Activated CD4-positive, alpha-beta T cell treated with anti-CD3 and anti-CD28 coated beads for 36 hours (primary cell): ENCODE measurements at regions of chr11 and their contacts with region 1.

Region 1: DNA sequence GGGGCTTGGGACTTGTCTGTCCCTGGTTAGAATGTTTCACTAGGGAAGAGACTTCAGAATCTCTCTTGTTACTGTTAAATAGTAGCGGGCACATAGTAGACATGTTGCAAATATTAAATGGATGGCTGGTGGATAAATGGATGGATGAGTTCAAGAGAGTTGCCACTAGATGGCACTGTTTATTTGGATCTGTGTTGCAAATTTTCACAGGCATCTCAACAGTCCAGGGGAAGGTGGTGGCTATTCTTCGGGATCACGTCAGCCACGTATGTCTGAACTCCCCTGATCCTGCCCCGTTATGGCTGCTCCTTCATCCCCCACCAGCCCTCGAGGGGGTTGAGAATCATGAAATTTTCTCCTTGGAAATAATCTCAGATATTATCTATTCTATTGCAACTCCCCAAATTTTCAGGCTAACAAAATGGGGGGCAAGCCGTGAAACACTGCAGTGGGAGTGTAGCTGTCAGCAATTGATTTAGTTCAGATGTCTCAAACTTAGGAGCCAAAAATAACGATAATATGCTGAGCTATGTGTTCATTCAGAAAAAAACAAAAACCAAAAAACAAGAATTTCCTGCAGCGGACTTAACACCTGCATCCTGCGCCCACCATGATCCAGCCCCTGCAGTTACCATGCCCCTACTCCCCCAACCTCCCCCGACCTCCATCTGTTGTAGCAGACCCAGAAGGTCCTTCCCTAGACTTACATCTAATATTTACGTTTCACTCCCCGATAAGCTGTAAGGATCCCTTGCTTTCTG is 29.1 kb upstream of the BIRC3 start:
- DNase-seq: peak; percentile 50
- ATAC-seq: peak; percentile 92
- H3K4me3 Mint-ChIP-seq: peak overlapping the region; percentile 34
- H3K27ac Mint-ChIP-seq: peak overlapping the region; percentile 59
- H3K4me1 Mint-ChIP-seq: peaks cover 24% of the 10 kb centered on the region
- H3K27me3 Mint-ChIP-seq: no peaks in the 10 kb centered on the region

Region 2: GRCh38 chr11:102237096-102237735 is 50.9 kb before region 1 on chr11:
- CTCF ChIA-PET with region 1: no interaction called
- POLR2A ChIA-PET with region 1: no interaction called
- intact Hi-C with region 1: no loop called
- DNase-seq: no peak
- ATAC-seq: no peak
- H3K4me3 Mint-ChIP-seq: no peak overlapping the region
- H3K27ac Mint-ChIP-seq: no peak overlapping the region
- H3K4me1 Mint-ChIP-seq: no peaks in the 10 kb centered on the region
- H3K27me3 Mint-ChIP-seq: peaks cover 21% of the 10 kb centered on the region

Region 3: GRCh38 chr11:102268329-102269193 is 19.6 kb before region 1 on chr11:
- CTCF ChIA-PET with region 1: interaction called, 15 read pairs
- POLR2A ChIA-PET with region 1: no interaction called
- intact Hi-C with region 1: no loop called
- DNase-seq: peak; percentile 93
- ATAC-seq: peak; percentile 98
- H3K4me3 Mint-ChIP-seq: peak overlapping the region; percentile 66
- H3K27ac Mint-ChIP-seq: peak overlapping the region; percentile 5
- H3K4me1 Mint-ChIP-seq: peaks cover 37% of the 10 kb centered on the region
- H3K27me3 Mint-ChIP-seq: peaks cover 5% of the 10 kb centered on the region

Region 4: DNA sequence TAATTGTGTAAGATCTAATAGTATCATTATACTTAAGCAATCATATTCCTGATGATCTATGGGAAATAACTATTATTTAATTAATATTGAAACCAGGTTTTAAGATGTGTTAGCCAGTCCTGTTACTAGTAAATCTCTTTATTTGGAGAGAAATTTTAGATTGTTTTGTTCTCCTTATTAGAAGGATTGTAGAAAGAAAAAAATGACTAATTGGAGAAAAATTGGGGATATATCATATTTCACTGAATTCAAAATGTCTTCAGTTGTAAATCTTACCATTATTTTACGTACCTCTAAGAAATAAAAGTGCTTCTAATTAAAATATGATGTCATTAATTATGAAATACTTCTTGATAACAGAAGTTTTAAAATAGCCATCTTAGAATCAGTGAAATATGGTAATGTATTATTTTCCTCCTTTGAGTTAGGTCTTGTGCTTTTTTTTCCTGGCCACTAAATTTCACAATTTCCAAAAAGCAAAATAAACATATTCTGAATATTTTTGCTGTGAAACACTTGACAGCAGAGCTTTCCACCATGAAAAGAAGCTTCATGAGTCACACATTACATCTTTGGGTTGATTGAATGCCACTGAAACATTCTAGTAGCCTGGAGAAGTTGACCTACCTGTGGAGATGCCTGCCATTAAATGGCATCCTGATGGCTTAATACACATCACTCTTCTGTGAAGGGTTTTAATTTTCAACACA is 35.6 kb after region 1 on chr11:
- CTCF ChIA-PET with region 1: interaction called, 61 read pairs
- POLR2A ChIA-PET with region 1: interaction called, 3 read pairs
- intact Hi-C with region 1: loop called in 1 of 2 experiments (anchors 1 kb)
- DNase-seq: no peak
- ATAC-seq: no peak
- H3K4me3 Mint-ChIP-seq: no peak overlapping the region
- H3K27ac Mint-ChIP-seq: peak overlapping the region; percentile 47
- H3K4me1 Mint-ChIP-seq: peaks cover 48% of the 10 kb centered on the region
- H3K27me3 Mint-ChIP-seq: no peaks in the 10 kb centered on the region

Region 5: DNA sequence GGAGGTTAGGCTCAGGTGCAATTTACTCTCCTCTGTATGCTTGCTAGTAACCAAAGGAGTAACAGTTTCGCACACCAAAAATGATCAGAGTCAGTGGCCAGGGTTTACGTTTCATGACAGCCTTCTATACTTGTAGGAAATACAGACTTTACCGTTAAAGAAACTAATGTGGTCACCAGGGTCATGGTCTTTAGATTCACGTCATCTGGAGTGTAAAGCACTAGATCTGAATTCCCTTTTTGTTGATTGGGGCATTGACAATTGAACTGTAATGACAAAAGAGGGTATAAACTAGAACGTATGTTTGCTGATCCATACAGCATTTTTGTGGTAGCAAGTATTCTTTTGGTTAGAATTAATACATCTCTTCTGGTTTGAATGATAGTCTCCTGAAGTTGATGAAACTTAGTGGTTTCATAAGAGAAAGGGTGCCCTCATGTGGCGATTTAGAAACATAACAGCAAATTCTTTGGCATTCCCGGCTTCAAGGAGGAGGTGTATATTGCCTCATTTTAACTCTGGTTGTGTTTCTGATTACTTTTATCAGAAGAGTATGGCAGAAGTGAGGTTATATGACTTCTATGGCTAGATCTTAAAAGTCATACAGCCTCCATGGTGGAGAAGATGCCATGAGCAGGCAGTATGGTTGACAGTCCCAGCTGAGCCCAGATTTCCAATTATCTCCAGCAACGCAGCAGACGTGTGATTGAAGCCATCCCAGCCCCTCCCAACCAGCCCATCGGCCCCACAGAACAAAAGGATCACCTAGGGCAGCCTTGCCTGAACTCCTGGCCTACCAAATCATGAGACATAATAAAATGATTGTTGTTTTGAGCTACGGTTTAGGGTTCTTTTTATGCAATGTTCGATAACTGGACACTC is 207.3 kb after region 1 on chr11:
- CTCF ChIA-PET with region 1: interaction called, 12 read pairs
- POLR2A ChIA-PET with region 1: no interaction called
- intact Hi-C with region 1: loop called (anchors 1 kb)
- DNase-seq: peak; percentile 40
- ATAC-seq: peak; percentile 68
- H3K4me3 Mint-ChIP-seq: no peak overlapping the region
- H3K27ac Mint-ChIP-seq: no peak overlapping the region
- H3K4me1 Mint-ChIP-seq: peaks cover 28% of the 10 kb centered on the region
- H3K27me3 Mint-ChIP-seq: peaks cover 4% of the 10 kb centered on the region

Region 6: GRCh38 chr11:102614485-102614884 is 326.3 kb after region 1 on chr11:
- CTCF ChIA-PET with region 1: interaction called, 18 read pairs
- POLR2A ChIA-PET with region 1: no interaction called
- intact Hi-C with region 1: loop called (anchors 1 to 2 kb)
- DNase-seq: no peak
- ATAC-seq: no peak
- H3K4me3 Mint-ChIP-seq: no peak overlapping the region
- H3K27ac Mint-ChIP-seq: no peak overlapping the region
- H3K4me1 Mint-ChIP-seq: peaks cover 13% of the 10 kb centered on the region
- H3K27me3 Mint-ChIP-seq: no peaks in the 10 kb centered on the region

Region 7: GRCh38 chr11:102940714-102941588 is 652.8 kb after region 1 on chr11:
- CTCF ChIA-PET with region 1: no interaction called
- POLR2A ChIA-PET with region 1: no interaction called
- intact Hi-C with region 1: loop called in 1 of 2 experiments (anchors 10 kb)
- DNase-seq: peak; percentile 49
- ATAC-seq: peak; percentile 88
- H3K4me3 Mint-ChIP-seq: no peak overlapping the region
- H3K27ac Mint-ChIP-seq: no peak overlapping the region
- H3K4me1 Mint-ChIP-seq: peaks cover 4% of the 10 kb centered on the region
- H3K27me3 Mint-ChIP-seq: peaks cover 7% of the 10 kb centered on the region